ENCODE measurements at regions of chr9 and their contacts with region 1.

Region 1: DNA sequence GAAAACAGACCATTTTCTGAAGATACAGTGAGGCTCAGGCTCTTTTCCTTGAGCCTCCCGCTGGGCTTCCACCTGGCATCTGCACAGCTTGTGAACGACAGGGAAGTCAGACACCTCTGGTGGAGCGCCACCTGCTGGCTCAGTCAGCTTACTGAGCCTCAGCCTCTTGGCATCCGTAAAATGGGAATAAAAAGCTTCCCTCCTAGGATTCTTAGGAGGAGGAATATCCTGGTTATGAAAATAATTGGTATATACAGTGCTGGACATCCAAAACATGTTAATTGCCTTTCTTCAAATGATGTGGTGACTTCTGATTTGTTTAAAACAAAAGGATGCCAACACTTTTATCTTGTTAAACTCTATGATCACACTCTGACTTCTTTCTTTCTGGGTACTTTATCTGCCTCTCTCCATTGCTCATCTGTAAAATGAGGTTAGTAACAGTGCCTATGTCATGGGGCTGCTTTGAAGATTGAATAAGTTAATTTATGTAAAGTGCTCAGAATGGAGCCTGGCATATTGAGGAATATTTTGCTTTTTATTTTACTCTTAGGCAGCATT is 67.5 kb downstream of the MAMDC2 start:
- DNase-seq: no peak
- ATAC-seq: peak; percentile 91
- H3K4me3 ChIP-seq: no peak overlapping the region
- H3K27ac ChIP-seq: no peak overlapping the region
- H3K4me1 ChIP-seq: no peaks in the 10 kb centered on the region
- H3K27me3 ChIP-seq: no peaks in the 10 kb centered on the region; a peak in 1 of 4 replicates
- CTCF ChIP-seq: peak; percentile 77 to 92 (median 85)
- EP300 ChIP-seq: no peak
- POLR2A ChIP-seq: no peak
- RAD21 ChIP-seq: peak; percentile 57

Region 2: GRCh38 chr9:69421908-69422801 is 689.0 kb before region 1 on chr9:
- CTCF ChIA-PET with region 1: interaction called, 23 read pairs
- POLR2A ChIA-PET with region 1: no interaction called
- RAD21 ChIA-PET with region 1: interaction called, 6 read pairs
- SMC1A ChIA-PET with region 1: interaction called, 12 read pairs
- in situ Hi-C with region 1: no loop called
- intact Hi-C with region 1: loop called (anchors 5 kb)
- DNase-seq: no peak
- ATAC-seq: peak; percentile 81
- H3K4me3 ChIP-seq: no peak overlapping the region
- H3K27ac ChIP-seq: no peak overlapping the region
- H3K4me1 ChIP-seq: no peaks in the 10 kb centered on the region
- H3K27me3 ChIP-seq: no peaks in the 10 kb centered on the region; a peak in 2 of 4 replicates
- CTCF ChIP-seq: peak; percentile 63 to 83 (median 70); a peak in 5 of 6 replicates
- EP300 ChIP-seq: no peak
- POLR2A ChIP-seq: no peak
- RAD21 ChIP-seq: peak; percentile 95

Region 3: DNA sequence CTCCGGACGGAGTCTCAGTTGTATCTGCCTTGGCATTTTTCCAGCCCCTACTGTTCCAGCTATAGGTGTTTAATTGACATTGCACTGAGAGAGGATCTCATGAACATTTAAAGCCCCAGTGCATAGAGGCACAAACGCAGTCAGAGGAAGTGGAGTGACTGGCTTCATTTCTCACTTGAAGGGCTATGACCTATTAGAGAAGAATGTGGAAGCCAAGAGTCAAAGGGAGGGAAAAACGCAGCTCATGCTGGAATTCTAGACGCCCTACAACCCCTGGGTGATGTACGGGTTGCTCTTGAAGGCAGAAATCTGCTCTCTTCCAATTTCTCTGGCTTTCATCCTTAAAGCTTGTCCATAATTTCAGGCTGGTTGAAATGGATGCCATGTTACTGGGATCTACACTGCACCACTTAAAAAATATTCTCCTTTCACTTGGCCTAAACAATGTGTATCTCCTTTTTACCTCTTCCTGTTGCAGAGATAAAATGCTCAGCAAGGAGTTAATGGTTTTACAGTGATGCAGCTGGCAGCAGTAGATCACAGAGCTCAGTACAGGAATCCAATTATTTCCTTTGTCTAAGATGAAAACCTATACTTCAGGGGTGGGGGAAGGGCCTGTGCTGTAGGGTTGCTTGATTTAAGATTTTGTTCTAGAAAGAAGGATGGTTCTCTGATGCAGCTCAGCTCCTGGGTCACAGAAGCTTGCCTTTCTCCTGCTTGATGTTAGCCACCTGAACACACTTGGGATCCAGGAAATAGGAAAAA is 129.3 kb before region 1 on chr9:
- CTCF ChIA-PET with region 1: interaction called, 182 read pairs
- POLR2A ChIA-PET with region 1: no interaction called
- RAD21 ChIA-PET with region 1: no interaction called
- SMC1A ChIA-PET with region 1: interaction called, 3 read pairs
- in situ Hi-C with region 1: no loop called
- intact Hi-C with region 1: no loop called
- DNase-seq: no peak
- ATAC-seq: no peak
- H3K4me3 ChIP-seq: no peak overlapping the region
- H3K27ac ChIP-seq: no peak overlapping the region
- H3K4me1 ChIP-seq: no peaks in the 10 kb centered on the region
- H3K27me3 ChIP-seq: no peaks in the 10 kb centered on the region
- CTCF ChIP-seq: no peak
- EP300 ChIP-seq: no peak
- POLR2A ChIP-seq: no peak
- RAD21 ChIP-seq: no peak

Region 4: GRCh38 chr9:70093944-70094343 is 17.2 kb before region 1 on chr9:
- CTCF ChIA-PET with region 1: interaction called, 50 read pairs
- POLR2A ChIA-PET with region 1: no interaction called
- RAD21 ChIA-PET with region 1: no interaction called
- SMC1A ChIA-PET with region 1: no interaction called
- in situ Hi-C with region 1: no loop called
- intact Hi-C with region 1: no loop called
- DNase-seq: no peak
- ATAC-seq: no peak
- H3K4me3 ChIP-seq: no peak overlapping the region
- H3K27ac ChIP-seq: no peak overlapping the region
- H3K4me1 ChIP-seq: no peaks in the 10 kb centered on the region
- H3K27me3 ChIP-seq: no peaks in the 10 kb centered on the region; a peak in 1 of 4 replicates
- CTCF ChIP-seq: no peak
- EP300 ChIP-seq: no peak
- POLR2A ChIP-seq: no peak
- RAD21 ChIP-seq: no peak

Region 5: DNA sequence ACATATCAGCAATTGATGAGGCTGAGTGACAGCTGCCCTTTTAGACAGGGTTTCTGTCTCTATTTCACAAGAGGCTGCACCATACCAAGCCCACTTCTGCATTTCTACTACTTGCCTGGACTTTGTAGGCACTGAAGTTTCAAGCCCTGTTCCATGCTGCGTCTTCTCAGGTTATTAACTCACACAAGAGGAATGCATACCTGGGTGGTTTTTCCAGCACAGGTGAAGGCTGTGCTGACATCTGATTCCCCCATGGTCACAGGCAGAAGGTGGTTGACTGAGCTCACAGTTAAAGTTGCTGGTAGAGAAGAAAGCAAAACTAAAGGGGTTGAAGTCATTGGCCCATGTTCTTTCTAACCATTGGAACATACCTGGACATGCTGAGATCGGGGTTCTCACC is 19.1 kb after region 1 on chr9:
- CTCF ChIA-PET with region 1: interaction called, 95 read pairs
- POLR2A ChIA-PET with region 1: no interaction called
- RAD21 ChIA-PET with region 1: no interaction called
- SMC1A ChIA-PET with region 1: interaction called, 6 read pairs
- in situ Hi-C with region 1: no loop called
- intact Hi-C with region 1: no loop called
- DNase-seq: no peak
- ATAC-seq: no peak
- H3K4me3 ChIP-seq: no peak overlapping the region
- H3K27ac ChIP-seq: no peak overlapping the region
- H3K4me1 ChIP-seq: no peaks in the 10 kb centered on the region
- H3K27me3 ChIP-seq: no peaks in the 10 kb centered on the region
- CTCF ChIP-seq: no peak
- EP300 ChIP-seq: no peak
- POLR2A ChIP-seq: no peak
- RAD21 ChIP-seq: no peak